CD8-positive, alpha-beta T cell (primary cell): ENCODE measurements at regions of chr15 and their contacts with region 1.

Region 1: DNA sequence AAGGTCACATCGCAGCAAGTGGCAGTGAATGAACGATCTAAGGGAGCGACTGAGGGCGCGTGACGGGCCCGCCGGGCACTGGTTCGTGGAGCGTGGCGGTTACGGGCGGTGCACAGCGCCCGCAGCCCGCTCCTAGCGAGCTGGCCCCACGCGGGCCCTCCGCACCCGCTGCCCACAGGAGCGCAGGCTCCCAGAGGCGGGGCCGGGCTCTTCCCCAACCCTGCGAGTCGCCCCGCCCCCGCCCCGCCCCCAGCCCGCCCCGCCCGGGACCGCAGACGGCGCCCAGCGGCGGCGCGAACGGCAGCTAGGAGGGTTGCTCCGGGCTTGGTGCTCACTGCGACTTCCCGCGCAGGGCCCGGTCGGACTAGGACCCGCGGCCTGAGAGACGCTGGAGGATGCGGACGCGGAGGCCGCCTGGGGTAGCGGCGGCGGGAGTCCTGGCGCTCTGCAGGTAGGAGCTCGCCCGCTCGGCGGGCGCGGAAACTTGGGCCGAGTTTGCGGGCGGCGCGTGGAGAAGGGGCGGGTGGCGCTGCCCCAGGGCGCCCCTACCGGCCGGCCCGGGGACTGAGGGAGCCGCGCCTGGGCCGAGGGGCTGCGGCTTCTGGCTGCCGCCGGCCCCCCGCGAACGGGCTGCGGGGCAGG is at the start of gene C15orf39:
- DNase-seq: peak; percentile 50 to 88 (median 72)
- ATAC-seq: peak; percentile 56
- H3K4me3 ChIP-seq: peak within 1 kb of the TSS; percentile 83 to 88
- H3K4me3 Mint-ChIP-seq: peak within 1 kb of the TSS; percentile 93
- H3K27ac ChIP-seq: peak within 1 kb of the TSS; percentile 82 to 85
- H3K27ac Mint-ChIP-seq: peak within 1 kb of the TSS; percentile 94
- H3K4me1 ChIP-seq: peaks cover 23% of the 10 kb centered on the region
- H3K4me1 Mint-ChIP-seq: peaks cover 47% of the 10 kb centered on the region
- H3K27me3 ChIP-seq: no peaks in the 10 kb centered on the region
- H3K27me3 Mint-ChIP-seq: no peaks in the 10 kb centered on the region
- CTCF ChIP-seq: peak; percentile 92
- total RNA-seq, gene C15orf39: 36.6 to 37.6 TPM

Region 2: DNA sequence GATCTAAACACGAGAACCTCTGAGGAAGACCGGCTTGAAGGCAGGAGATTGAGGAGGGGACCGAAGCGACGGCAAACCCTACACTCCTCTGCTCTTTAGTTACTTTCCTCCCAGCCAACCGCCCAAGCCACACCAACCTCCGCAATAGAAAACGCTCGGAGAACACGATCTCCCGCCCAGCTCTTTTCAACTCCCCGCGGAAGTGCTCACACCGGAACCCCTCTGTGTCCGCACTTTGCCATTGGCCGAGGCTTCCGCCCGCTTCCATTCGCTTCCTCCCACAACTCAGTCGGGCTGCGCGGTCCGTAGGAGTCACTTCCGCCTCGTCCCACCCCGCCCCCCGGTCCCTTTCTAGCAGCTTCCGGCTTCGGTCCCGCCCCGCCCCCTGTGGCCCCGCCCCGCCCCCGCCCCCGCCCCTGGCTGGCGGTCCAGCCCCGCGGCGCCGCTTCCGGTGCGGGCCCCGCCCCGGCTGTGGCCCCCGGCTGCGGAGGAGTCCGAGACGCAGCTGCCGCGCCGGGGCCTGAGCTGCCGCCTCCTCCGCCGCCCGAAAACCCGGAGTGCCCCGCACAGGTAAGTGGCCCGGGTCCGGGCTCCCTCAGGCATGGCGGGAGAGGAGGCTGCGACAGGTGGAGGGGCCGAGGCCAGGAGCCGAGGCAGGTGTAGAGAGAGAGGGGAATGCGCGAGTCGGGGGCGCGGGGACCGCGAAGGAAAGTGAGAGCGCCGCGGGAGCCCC is 660.8 kb before region 1 on chr15 and contains the start of gene ARID3B:
- CTCF ChIA-PET with region 1: no interaction called
- POLR2A ChIA-PET with region 1: no interaction called
- intact Hi-C with region 1: loop called (anchors 2 kb)
- DNase-seq: peak; percentile 89 to 98 (median 95)
- ATAC-seq: peak; percentile 82
- H3K4me3 ChIP-seq: peak within 1 kb of the TSS; percentile 88
- H3K4me3 Mint-ChIP-seq: peak within 1 kb of the TSS; percentile 99
- H3K27ac ChIP-seq: peak within 1 kb of the TSS; percentile 66 to 81
- H3K27ac Mint-ChIP-seq: peak within 1 kb of the TSS; percentile 98
- H3K4me1 ChIP-seq: peaks cover 39% of the 10 kb centered on the region
- H3K4me1 Mint-ChIP-seq: peaks cover 55% of the 10 kb centered on the region
- H3K27me3 ChIP-seq: no peaks in the 10 kb centered on the region
- H3K27me3 Mint-ChIP-seq: no peaks in the 10 kb centered on the region
- CTCF ChIP-seq: no peak
- total RNA-seq, gene ARID3B: 35.2 to 38.7 TPM

Region 3: GRCh38 chr15:74695597-74696397 is 505.9 kb before region 1 on chr15 and contains the start of gene EDC3:
- CTCF ChIA-PET with region 1: no interaction called
- POLR2A ChIA-PET with region 1: no interaction called
- intact Hi-C with region 1: loop called in 1 of 2 experiments (anchors 5 kb)
- DNase-seq: peak; percentile 72 to 94 (median 89)
- ATAC-seq: peak; percentile 88
- H3K4me3 ChIP-seq: peak within 1 kb of the TSS; percentile 79 to 93
- H3K4me3 Mint-ChIP-seq: peak within 1 kb of the TSS; percentile 100
- H3K27ac ChIP-seq: peak within 1 kb of the TSS; percentile 80 to 83
- H3K27ac Mint-ChIP-seq: peak within 1 kb of the TSS; percentile 99
- H3K4me1 ChIP-seq: peaks cover 14% of the 10 kb centered on the region
- H3K4me1 Mint-ChIP-seq: peaks cover 47% of the 10 kb centered on the region
- H3K27me3 ChIP-seq: peaks cover 0 to 1% of the 10 kb centered on the region in 2 experiments
- H3K27me3 Mint-ChIP-seq: no peaks in the 10 kb centered on the region
- CTCF ChIP-seq: no peak
- total RNA-seq, gene EDC3: 9.8 to 11.8 TPM

Region 4: GRCh38 chr15:74937596-74938296 is 264.0 kb before region 1 on chr15 and contains the start of gene COX5A:
- CTCF ChIA-PET with region 1: no interaction called
- POLR2A ChIA-PET with region 1: interaction called, 5 read pairs
- intact Hi-C with region 1: loop called (anchors 5 kb)
- DNase-seq: peak; percentile 83 to 97 (median 88)
- ATAC-seq: peak; percentile 96
- H3K4me3 ChIP-seq: peak within 1 kb of the TSS; percentile 73 to 86
- H3K4me3 Mint-ChIP-seq: peak within 1 kb of the TSS; percentile 88
- H3K27ac ChIP-seq: peak within 1 kb of the TSS; percentile 72 to 73
- H3K27ac Mint-ChIP-seq: peak within 1 kb of the TSS; percentile 92
- H3K4me1 ChIP-seq: peaks cover 14% of the 10 kb centered on the region
- H3K4me1 Mint-ChIP-seq: peaks cover 31% of the 10 kb centered on the region
- H3K27me3 ChIP-seq: no peaks in the 10 kb centered on the region
- H3K27me3 Mint-ChIP-seq: no peaks in the 10 kb centered on the region
- CTCF ChIP-seq: no peak
- total RNA-seq, gene COX5A: 40.0 to 42.6 TPM

Region 5: GRCh38 chr15:75023181-75023871 is 178.4 kb before region 1 on chr15 and contains the start of gene PPCDC:
- CTCF ChIA-PET with region 1: interaction called, 114 read pairs
- POLR2A ChIA-PET with region 1: interaction called, 8 read pairs
- intact Hi-C with region 1: loop called (anchors 1 kb)
- DNase-seq: peak; percentile 81 to 96 (median 93)
- ATAC-seq: peak; percentile 100
- H3K4me3 ChIP-seq: peak within 1 kb of the TSS; percentile 82 to 93
- H3K4me3 Mint-ChIP-seq: peak within 1 kb of the TSS; percentile 92
- H3K27ac ChIP-seq: peak within 1 kb of the TSS; percentile 76 to 77
- H3K27ac Mint-ChIP-seq: peak within 1 kb of the TSS; percentile 92
- H3K4me1 ChIP-seq: peaks cover 8% of the 10 kb centered on the region
- H3K4me1 Mint-ChIP-seq: peaks cover 14% of the 10 kb centered on the region
- H3K27me3 ChIP-seq: no peaks in the 10 kb centered on the region
- H3K27me3 Mint-ChIP-seq: no peaks in the 10 kb centered on the region
- CTCF ChIP-seq: no peak
- total RNA-seq, gene PPCDC: 6.0 to 6.5 TPM

Region 6: DNA sequence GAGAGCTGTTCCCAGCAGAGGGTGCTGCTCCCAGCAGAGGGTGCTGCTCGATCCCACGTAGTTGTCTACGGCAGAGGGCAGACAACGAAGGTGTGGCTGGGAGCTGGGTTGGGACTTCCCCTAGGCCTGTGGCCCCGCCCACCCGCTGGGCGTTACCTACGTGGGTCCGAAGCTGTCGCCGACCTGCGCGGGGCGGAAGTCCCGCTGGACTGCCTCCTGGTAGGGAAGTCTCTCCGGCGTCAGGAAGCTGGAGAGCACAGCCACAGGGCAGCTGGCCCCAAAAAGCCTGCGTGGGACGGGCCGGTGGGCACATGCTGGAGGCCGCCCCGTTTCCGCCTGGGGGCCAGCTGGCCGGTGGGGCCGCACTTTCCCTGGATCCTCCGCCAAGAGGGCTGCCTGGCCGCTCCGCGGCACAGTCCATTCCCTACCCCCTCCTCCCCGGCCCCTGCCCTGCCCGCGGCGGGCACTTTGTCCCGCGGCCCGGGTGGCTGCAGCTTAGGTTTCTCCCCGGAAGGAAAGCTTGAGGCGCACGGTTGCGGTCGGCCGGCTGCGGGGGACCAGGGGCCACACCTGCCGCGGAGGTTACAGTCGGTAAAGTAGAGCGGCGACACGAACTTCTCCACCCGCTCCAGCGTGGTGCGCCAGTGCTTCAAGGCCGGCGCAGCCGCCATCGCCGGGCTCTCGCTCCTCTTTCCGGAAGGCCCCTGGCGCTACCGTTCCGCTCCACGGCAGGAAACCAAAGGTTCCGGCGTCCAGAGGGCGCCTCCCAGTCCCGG is 166.4 kb after region 1 on chr15 and contains the start of gene MAN2C1:
- CTCF ChIA-PET with region 1: no interaction called
- POLR2A ChIA-PET with region 1: interaction called, 3 read pairs
- intact Hi-C with region 1: loop called (anchors 5 kb)
- DNase-seq: peak; percentile 76 to 97 (median 91)
- ATAC-seq: peak; percentile 97
- H3K4me3 ChIP-seq: peak within 1 kb of the TSS; percentile 86 to 97
- H3K4me3 Mint-ChIP-seq: peak within 1 kb of the TSS; percentile 91
- H3K27ac ChIP-seq: peak within 1 kb of the TSS; percentile 89 to 96
- H3K27ac Mint-ChIP-seq: peak within 1 kb of the TSS; percentile 94
- H3K4me1 ChIP-seq: peaks cover 15% of the 10 kb centered on the region
- H3K4me1 Mint-ChIP-seq: peaks cover 24% of the 10 kb centered on the region
- H3K27me3 ChIP-seq: no peaks in the 10 kb centered on the region
- H3K27me3 Mint-ChIP-seq: no peaks in the 10 kb centered on the region
- CTCF ChIP-seq: no peak
- total RNA-seq, gene MAN2C1: 342 to 373 TPM